ENCODE measurements at regions of chr12 and their contacts with region 1.

Region 1: DNA sequence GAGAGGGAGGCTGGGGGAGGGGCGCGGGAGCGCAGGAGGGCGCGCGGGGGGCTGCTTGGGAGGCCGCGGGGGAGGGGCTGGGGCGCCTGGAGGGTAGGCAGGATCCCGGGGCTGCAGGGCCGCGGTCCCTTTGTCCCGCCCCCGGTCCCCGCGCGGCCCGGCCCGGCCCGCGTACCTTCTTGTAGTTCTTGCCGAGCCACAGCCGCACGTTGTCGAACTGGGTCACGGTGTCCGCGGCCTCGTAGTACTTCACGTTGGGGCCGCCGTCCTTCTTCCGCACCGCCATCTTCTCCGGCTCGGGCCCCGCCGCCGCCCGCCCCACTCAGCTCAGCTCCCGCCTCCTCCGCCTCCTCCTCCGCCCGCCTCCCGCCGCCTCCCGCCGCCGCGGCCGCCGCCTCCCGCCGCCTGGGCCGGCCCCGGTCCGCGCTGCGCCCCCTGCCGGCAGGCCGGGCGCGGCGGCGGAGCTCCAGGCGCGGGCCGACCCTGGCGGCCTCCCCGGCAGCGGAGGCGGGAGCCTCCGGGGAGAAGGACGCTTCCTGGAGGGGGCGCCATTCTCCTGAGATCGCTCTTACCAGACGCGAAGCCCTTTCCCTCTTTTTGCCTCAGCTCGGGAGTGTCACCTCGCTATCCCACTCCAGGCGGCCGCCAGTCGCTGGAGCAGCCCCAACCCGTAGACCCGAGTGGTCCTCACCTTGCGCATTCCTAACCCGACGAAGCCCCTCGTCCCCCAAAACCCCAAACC is at the start of gene SMARCC2:
- DNase-seq: peak; percentile 91
- ATAC-seq: peak; percentile 87
- H3K4me3 ChIP-seq: peak within 1 kb of the TSS; percentile 61 to 89 (median 85)
- H3K4me3 Mint-ChIP-seq: peak within 1 kb of the TSS; percentile 98
- H3K27ac ChIP-seq: peak within 1 kb of the TSS; percentile 75 to 86
- H3K27ac Mint-ChIP-seq: peak within 1 kb of the TSS; percentile 97
- H3K4me1 ChIP-seq: peaks cover 19 to 34% of the 10 kb centered on the region in 2 donors
- H3K4me1 Mint-ChIP-seq: peaks cover 48% of the 10 kb centered on the region
- H3K27me3 ChIP-seq: no peaks in the 10 kb centered on the region
- H3K27me3 Mint-ChIP-seq: no peaks in the 10 kb centered on the region
- CTCF ChIP-seq: peak; percentile 72
- total RNA-seq, gene SMARCC2: 195 and 198 TPM in 2 replicates

Region 2: DNA sequence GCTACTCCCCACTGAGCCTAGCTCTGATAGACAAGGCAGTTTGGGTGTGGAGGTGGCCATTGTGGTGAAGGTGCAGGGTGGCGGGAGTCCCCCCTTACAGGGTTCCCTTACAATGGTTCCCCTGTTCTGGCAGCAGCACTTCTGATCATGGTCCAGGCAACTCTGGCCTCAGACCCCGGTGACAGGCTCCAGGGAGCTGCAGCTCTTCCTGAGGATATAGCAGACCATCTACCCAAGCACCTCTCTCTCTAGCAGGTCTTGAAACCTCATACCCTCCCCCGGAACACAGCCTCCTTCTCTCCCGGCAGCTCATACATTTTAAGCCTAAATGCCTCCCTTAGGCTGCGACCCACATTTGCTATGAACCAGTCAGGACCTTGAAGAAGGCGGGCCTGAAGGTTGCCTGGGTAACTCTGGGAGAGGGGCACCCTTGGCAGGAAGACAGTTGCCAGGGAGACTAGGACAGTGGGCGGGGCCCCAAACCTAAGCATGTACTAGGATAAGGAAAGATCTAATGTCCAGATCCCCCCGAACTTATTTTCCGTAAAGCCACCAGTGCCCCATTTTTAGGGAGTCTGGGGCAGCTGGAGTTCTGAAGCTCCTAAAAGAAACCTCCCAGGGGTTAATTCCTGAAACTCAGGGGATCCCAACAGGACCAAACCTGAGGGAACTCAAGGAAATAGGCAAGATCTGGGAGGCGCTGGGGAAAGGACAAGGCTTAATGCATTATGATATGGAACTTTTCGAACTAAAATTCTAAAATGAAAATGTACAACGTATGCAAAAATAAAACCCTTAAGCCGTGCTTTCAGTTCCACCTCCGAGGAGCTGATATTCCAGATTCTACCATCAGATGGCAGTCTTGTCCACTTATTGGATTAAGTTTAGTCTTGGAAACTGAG is 451.0 kb before region 1 on chr12:
- CTCF ChIA-PET with region 1: interaction called, 18 read pairs
- POLR2A ChIA-PET with region 1: no interaction called
- intact Hi-C with region 1: no loop called
- DNase-seq: peak; percentile 89
- ATAC-seq: peak; percentile 81
- H3K4me3 ChIP-seq: peak overlapping the region; percentile 61 to 97 (median 89)
- H3K4me3 Mint-ChIP-seq: peak overlapping the region; percentile 89
- H3K27ac ChIP-seq: peak overlapping the region; percentile 70 to 84
- H3K27ac Mint-ChIP-seq: peak overlapping the region; percentile 91
- H3K4me1 ChIP-seq: peaks cover 15 to 20% of the 10 kb centered on the region in 2 donors
- H3K4me1 Mint-ChIP-seq: peaks cover 21% of the 10 kb centered on the region
- H3K27me3 ChIP-seq: no peaks in the 10 kb centered on the region
- H3K27me3 Mint-ChIP-seq: no peaks in the 10 kb centered on the region
- CTCF ChIP-seq: peak; percentile 91

Region 3: GRCh38 chr12:56104109-56104814 is 85.1 kb before region 1 on chr12 and contains the start of gene PA2G4:
- CTCF ChIA-PET with region 1: interaction called, 11 read pairs
- POLR2A ChIA-PET with region 1: interaction called, 5 read pairs
- intact Hi-C with region 1: no loop called
- DNase-seq: peak; percentile 95
- ATAC-seq: peak; percentile 89
- H3K4me3 ChIP-seq: peak within 1 kb of the TSS; percentile 56 to 93 (median 86)
- H3K4me3 Mint-ChIP-seq: peak within 1 kb of the TSS; percentile 100
- H3K27ac ChIP-seq: peak within 1 kb of the TSS; percentile 66 to 67
- H3K27ac Mint-ChIP-seq: peak within 1 kb of the TSS; percentile 92
- H3K4me1 ChIP-seq: peaks cover 18 to 23% of the 10 kb centered on the region in 2 donors
- H3K4me1 Mint-ChIP-seq: peaks cover 38% of the 10 kb centered on the region
- H3K27me3 ChIP-seq: no peaks in the 10 kb centered on the region
- H3K27me3 Mint-ChIP-seq: no peaks in the 10 kb centered on the region
- CTCF ChIP-seq: no peak
- total RNA-seq, gene PA2G4: 77.3 and 84.6 TPM in 2 replicates

Region 4: DNA sequence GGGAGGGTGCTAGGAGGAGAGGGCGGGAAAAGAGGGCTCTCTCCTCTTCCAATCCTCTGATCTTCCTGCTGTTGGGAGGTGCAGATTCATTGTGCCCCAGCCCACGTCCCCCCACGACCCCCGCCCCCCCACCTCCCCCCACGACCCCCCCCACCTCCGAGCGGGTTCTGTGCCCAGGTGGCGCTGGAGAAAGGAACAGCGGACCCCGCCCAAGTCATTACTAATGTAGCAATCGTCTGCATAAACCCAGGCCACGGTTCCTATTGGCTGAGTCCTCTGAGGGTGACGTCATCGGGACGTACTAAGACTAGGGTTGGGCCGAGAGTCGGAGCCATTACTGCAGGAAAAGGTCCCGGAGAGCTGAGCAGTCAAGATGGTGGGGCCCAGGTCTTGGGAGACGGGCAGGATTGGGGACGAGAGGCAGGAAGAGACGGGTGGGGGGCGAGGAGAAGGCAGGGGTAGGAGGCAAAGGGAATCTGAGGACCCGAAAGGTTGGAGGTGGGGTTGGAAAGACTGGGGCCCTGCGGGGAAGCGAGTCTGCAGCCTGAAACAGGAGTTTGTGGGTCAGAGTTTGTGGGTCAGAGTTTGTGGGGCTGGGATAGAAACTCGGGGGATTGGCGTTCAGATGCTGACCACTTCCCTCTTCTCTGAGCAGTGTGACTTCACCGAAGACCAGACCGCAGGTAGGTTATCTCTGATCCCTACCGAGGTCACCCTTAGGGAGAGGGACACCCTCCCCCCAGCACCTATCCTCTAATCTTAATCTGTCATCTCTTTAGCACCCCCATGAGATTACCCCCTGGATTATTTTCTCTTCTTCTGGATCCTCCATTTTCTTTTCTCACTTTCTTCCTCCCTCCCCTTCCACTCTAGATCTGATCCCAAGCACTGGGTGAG is 31.1 kb before region 1 on chr12 and contains the start of gene MYL6:
- CTCF ChIA-PET with region 1: interaction called, 24 read pairs
- POLR2A ChIA-PET with region 1: interaction called, 14 read pairs
- intact Hi-C with region 1: loop called (anchors 1 kb)
- DNase-seq: peak; percentile 96
- ATAC-seq: peak; percentile 87
- H3K4me3 ChIP-seq: peak within 1 kb of the TSS; percentile 80 to 97 (median 94)
- H3K4me3 Mint-ChIP-seq: peak within 1 kb of the TSS; percentile 96
- H3K27ac ChIP-seq: peak within 1 kb of the TSS; percentile 88 to 97
- H3K27ac Mint-ChIP-seq: peak within 1 kb of the TSS; percentile 97
- H3K4me1 ChIP-seq: peaks cover 20 to 40% of the 10 kb centered on the region in 2 donors
- H3K4me1 Mint-ChIP-seq: peaks cover 44% of the 10 kb centered on the region
- H3K27me3 ChIP-seq: no peaks in the 10 kb centered on the region
- H3K27me3 Mint-ChIP-seq: no peaks in the 10 kb centered on the region
- CTCF ChIP-seq: no peak
- total RNA-seq, gene MYL6: 645 and 675 TPM in 2 replicates

Region 5: DNA sequence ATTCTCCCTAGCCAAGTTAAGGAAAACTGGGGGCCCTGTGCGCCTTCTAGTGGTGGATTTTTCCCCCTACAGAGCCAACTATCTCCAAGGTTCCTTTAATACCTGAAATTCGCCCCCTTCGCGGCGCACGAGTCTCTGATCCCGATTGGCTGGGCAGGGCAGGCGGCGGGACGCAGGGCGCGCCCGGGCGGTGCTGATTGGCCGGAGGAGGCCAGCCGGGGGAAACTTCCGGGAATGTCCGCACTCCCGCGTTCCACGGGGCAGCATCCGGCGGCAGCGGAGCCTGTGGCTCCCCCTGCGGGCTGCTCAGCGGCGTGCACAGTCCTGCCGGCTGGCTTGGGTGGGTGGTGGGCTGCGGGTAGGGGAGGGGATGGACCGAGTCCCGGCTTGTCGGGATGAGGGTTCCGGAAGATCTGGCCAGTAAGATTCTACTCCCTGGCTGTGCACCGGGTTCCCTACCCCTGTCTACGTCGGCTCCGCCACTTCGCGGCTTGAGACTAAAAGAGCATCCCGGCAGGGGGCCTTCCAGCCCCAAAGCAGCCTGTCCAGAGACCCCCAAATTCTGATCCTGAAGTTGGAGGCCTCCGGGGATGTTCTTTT is 34.9 kb after region 1 on chr12 and contains the start of gene NABP2:
- CTCF ChIA-PET with region 1: interaction called, 72 read pairs
- POLR2A ChIA-PET with region 1: interaction called, 21 read pairs
- intact Hi-C with region 1: loop called (anchors 1 kb)
- DNase-seq: peak; percentile 94
- ATAC-seq: peak; percentile 72
- H3K4me3 ChIP-seq: peak within 1 kb of the TSS; percentile 41 to 71 (median 62)
- H3K4me3 Mint-ChIP-seq: peak within 1 kb of the TSS; percentile 100
- H3K27ac ChIP-seq: peak within 1 kb of the TSS; percentile 53 to 79
- H3K27ac Mint-ChIP-seq: peak within 1 kb of the TSS; percentile 87
- H3K4me1 ChIP-seq: peaks cover 26 to 48% of the 10 kb centered on the region in 2 donors
- H3K4me1 Mint-ChIP-seq: peaks cover 47% of the 10 kb centered on the region
- H3K27me3 ChIP-seq: no peaks in the 10 kb centered on the region
- H3K27me3 Mint-ChIP-seq: no peaks in the 10 kb centered on the region
- CTCF ChIP-seq: peak; percentile 93
- total RNA-seq, gene NABP2: 12.4 and 14.9 TPM in 2 replicates

Region 6: GRCh38 chr12:56315622-56316473 is 126.5 kb after region 1 on chr12 and contains the start of gene CNPY2:
- CTCF ChIA-PET with region 1: no interaction called
- POLR2A ChIA-PET with region 1: no interaction called
- intact Hi-C with region 1: loop called (anchors 5 kb)
- DNase-seq: peak; percentile 99
- ATAC-seq: peak; percentile 86
- H3K4me3 ChIP-seq: peak within 1 kb of the TSS; percentile 78 to 94 (median 91)
- H3K4me3 Mint-ChIP-seq: peak within 1 kb of the TSS; percentile 99
- H3K27ac ChIP-seq: peak within 1 kb of the TSS; percentile 67 to 90
- H3K27ac Mint-ChIP-seq: peak within 1 kb of the TSS; percentile 99
- H3K4me1 ChIP-seq: peaks cover 12 to 15% of the 10 kb centered on the region in 2 donors
- H3K4me1 Mint-ChIP-seq: peaks cover 10% of the 10 kb centered on the region
- H3K27me3 ChIP-seq: no peaks in the 10 kb centered on the region
- H3K27me3 Mint-ChIP-seq: no peaks in the 10 kb centered on the region
- CTCF ChIP-seq: no peak
- total RNA-seq, gene CNPY2: 89.0 and 91.2 TPM in 2 replicates

Region 7: GRCh38 chr12:56461235-56462159 is 272.1 kb after region 1 on chr12:
- CTCF ChIA-PET with region 1: interaction called, 16 read pairs
- POLR2A ChIA-PET with region 1: no interaction called
- intact Hi-C with region 1: loop called (anchors 1 kb)
- DNase-seq: no peak
- ATAC-seq: no peak
- H3K4me3 ChIP-seq: no peak overlapping the region
- H3K4me3 Mint-ChIP-seq: no peak overlapping the region
- H3K27ac ChIP-seq: peak overlapping the region; percentile 40 to 70
- H3K27ac Mint-ChIP-seq: peak overlapping the region; percentile 91
- H3K4me1 ChIP-seq: peaks cover 13 to 24% of the 10 kb centered on the region in 2 donors
- H3K4me1 Mint-ChIP-seq: peaks cover 23% of the 10 kb centered on the region
- H3K27me3 ChIP-seq: no peaks in the 10 kb centered on the region
- H3K27me3 Mint-ChIP-seq: no peaks in the 10 kb centered on the region
- CTCF ChIP-seq: no peak

Measured in B cell (primary cell).